Mammary epithelial cell (primary cell): ENCODE measurements at regions of chr6 and their contacts with region 1.

Region 1: DNA sequence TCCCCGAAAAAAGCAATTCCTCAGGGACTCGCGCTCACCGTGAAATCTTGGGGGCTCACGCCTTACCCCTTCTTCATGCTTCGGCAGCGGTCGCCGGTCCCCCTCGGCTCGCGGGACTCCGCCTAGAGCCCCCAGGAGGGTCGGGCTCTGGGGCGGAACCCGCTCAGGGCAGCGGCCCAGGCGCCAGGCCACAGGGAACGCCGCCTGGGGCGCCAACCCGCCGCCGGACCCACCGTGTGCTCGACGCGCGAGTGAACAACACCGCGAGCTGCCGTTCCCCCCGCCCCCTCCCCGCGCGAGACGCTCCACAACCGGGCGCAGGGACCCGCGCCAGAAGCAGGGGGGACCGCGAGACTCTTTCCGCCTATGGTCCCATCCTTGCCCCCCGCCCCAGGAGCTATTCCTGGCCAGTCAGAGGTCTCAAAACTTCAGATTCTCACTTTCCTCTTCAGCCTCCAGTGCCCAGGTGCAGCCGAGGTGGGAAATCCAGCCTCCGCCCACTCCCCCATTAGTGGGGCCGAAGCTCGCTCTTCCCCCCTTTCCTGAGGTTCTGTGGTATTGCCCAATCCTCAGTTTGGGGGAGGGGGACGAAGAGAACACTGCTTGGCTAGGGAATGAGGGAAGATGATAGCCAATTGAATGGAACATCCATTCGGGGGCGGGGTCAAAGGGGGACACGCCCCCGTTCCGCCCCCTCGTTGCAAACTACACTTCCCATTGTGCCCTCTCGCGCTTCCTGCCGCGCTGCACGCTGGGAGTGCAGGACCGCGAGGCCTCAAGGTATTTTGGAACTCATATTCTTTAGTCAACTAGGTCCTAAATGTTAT is at the start of gene WASF1:
- DNase-seq: peak; percentile 98
- H3K4me3 ChIP-seq: peak within 1 kb of the TSS; percentile 86 to 95 (median 91)
- H3K27ac ChIP-seq: peak within 1 kb of the TSS; percentile 90
- H3K4me1 ChIP-seq: peaks cover 13% of the 10 kb centered on the region
- H3K27me3 ChIP-seq: no peaks in the 10 kb centered on the region
- CTCF ChIP-seq: no peak
- total RNA-seq, gene WASF1: 14.7 to 32.9 TPM

Region 2: DNA sequence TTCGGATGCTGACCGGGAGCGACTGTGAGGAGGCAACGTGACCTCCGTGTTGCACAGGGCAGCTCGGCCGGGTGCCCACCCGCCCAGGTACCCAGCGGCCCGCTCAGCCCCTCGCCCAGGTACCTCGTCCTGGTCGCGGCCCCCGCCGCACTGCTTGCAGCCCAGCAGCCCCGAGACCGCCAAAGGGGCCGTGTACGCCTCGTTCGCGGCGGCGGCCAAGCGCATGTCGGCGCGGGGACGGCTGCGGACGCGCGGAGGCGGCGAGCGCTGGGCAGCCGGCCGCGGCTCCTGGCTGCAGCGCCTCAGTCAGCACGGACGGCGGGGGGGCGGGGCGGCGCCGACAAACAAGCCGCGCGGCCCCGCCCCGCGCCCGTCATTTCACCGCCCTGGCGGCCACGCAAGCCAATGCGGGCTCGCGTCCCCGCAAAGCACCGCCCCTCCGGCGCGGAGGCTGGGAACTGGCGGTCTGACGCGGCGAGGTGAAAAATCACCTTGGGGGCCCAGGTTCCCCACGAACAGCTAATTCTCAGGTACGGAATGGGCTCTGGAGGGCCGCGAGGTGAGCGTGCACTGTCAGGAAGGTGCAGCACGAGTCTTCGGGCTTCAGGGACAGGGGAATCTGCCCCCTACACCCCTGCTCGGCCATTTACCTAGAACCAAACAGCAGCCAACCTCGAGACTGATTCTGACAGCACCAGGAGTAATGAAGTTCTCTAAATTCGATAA is 1170.2 kb before region 1 on chr6:
- CTCF ChIA-PET with region 1: no interaction called
- dilution Hi-C with region 1: no loop called
- in situ Hi-C with region 1: no loop called
- intact Hi-C with region 1: loop called (anchors 5 kb)
- DNase-seq: peak; percentile 89
- H3K4me3 ChIP-seq: peak overlapping the region; percentile 80 to 100 (median 97)
- H3K27ac ChIP-seq: peak overlapping the region; percentile 98
- H3K4me1 ChIP-seq: peaks cover 16% of the 10 kb centered on the region
- H3K27me3 ChIP-seq: no peaks in the 10 kb centered on the region
- CTCF ChIP-seq: no peak

Region 3: DNA sequence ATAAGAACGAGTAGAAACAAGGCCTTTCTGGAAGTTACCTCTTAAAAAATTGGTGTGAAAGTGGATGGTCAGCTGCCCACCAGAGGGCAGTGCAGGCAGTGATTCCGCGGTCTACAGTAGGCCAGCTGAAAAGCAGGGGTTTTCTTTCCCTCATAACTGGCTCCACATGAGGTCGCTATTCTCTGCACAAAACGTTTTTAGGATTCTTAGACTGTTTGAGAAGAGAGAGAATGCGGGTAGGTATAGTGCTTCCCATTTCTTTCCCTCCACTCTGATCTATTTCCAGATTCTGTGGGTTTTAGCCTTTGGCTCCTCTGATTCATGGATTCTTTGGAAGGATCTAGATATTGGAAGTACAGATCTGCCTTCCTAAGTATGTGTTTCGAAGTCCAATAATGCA is 474.4 kb before region 1 on chr6:
- CTCF ChIA-PET with region 1: no interaction called
- dilution Hi-C with region 1: no loop called
- in situ Hi-C with region 1: no loop called
- intact Hi-C with region 1: loop called (anchors 5 kb)
- DNase-seq: peak; percentile 72
- H3K4me3 ChIP-seq: no peak overlapping the region
- H3K27ac ChIP-seq: no peak overlapping the region
- H3K4me1 ChIP-seq: no peaks in the 10 kb centered on the region
- H3K27me3 ChIP-seq: no peaks in the 10 kb centered on the region
- CTCF ChIP-seq: peak; percentile 96

Region 4: DNA sequence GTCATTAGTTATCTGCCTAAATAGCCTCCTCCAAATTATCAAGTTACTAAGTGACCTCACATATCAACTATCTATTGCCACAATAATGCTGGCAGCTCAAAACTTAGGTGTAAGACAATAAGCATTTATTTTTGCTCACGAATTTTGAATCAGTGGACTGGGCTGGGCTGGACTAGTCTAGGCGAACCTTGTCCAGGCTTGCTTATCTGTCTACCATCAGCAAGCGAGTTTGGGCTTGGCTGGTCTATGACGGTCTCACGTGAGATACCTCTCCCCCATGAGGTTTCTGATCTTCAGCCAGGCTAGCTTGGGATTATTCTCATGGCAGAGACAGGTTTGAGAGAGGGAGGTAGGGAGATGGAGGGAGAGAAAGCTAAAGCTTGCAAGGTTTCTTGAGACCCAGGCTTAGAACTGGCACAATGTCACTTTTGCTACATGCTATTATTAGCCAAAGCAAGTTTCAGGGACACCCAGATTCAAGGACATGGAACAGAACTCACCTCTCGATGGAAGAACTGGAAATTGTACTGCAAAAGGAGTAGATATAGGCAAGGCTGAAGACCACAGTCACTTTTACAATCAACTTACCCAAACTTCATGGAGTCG is 81.0 kb before region 1 on chr6:
- CTCF ChIA-PET with region 1: no interaction called
- dilution Hi-C with region 1: no loop called
- in situ Hi-C with region 1: no loop called
- intact Hi-C with region 1: loop called (anchors 2 kb)
- DNase-seq: peak; percentile 98
- H3K4me3 ChIP-seq: no peak overlapping the region
- H3K27ac ChIP-seq: peak overlapping the region; percentile 95
- H3K4me1 ChIP-seq: peaks cover 46% of the 10 kb centered on the region
- H3K27me3 ChIP-seq: no peaks in the 10 kb centered on the region
- CTCF ChIP-seq: no peak

Region 5: GRCh38 chr6:110217266-110217665 is 37.7 kb after region 1 on chr6:
- CTCF ChIA-PET with region 1: no interaction called
- dilution Hi-C with region 1: no loop called
- in situ Hi-C with region 1: no loop called
- intact Hi-C with region 1: loop called (anchors 1 kb)
- DNase-seq: peak; percentile 54
- H3K4me3 ChIP-seq: no peak overlapping the region
- H3K27ac ChIP-seq: peak overlapping the region; percentile 6
- H3K4me1 ChIP-seq: peaks cover 13% of the 10 kb centered on the region
- H3K27me3 ChIP-seq: no peaks in the 10 kb centered on the region
- CTCF ChIP-seq: no peak

Region 6: DNA sequence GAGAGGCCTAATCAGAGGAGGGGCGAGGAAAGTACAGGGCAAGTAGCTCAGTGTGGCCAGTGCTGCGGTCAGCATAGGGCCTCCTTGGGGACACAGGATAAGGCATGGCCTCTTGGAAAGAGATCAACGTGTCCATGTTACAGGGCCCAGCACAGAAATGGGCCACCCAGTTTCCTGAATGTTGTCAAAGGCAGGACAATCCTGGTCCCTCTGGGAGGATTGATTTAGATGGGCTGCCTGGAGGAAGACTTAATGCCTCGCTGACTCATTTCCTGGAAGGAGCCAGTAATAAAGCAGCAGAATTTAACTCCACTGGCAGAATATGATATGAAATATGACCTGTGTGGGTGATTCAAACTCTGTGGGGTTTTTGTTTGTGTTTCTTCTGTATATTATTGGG is 219.2 kb after region 1 on chr6:
- CTCF ChIA-PET with region 1: no interaction called
- dilution Hi-C with region 1: no loop called
- in situ Hi-C with region 1: loop called in 1 of 2 experiments (anchors 25 kb)
- intact Hi-C with region 1: no loop called
- DNase-seq: peak; percentile 23
- H3K4me3 ChIP-seq: no peak overlapping the region
- H3K27ac ChIP-seq: no peak overlapping the region
- H3K4me1 ChIP-seq: peaks cover 11% of the 10 kb centered on the region
- H3K27me3 ChIP-seq: no peaks in the 10 kb centered on the region
- CTCF ChIP-seq: no peak